Left lung (tissue), 14 donors: ENCODE measurements at regions of chr12 and their contacts with region 1.

Region 1: GRCh38 chr12:97308576-97309198 is 153.9 kb upstream of the RMST start:
- DNase-seq: peak in 2 of 4 donors; percentile 16 to 47
- ATAC-seq: peak; percentile 76
- H3K4me3 ChIP-seq: no peak overlapping the region
- H3K27ac ChIP-seq: no peak overlapping the region
- H3K4me1 ChIP-seq: peaks cover 0 to 4% of the 10 kb centered on the region in 2 donors
- H3K27me3 ChIP-seq: no peaks in the 10 kb centered on the region
- CTCF ChIP-seq: peak; percentile 59 to 79

Region 2: GRCh38 chr12:96578526-96579125 is 730.1 kb before region 1 on chr12:
- intact Hi-C with region 1: loop called in 1 of 2 experiments (anchors 10 kb)
- DNase-seq: peak in 2 of 4 donors; percentile 46 to 67
- ATAC-seq: peak; percentile 85
- H3K4me3 ChIP-seq: no peak overlapping the region
- H3K27ac ChIP-seq: no peak overlapping the region
- H3K4me1 ChIP-seq: no peaks in the 10 kb centered on the region
- H3K27me3 ChIP-seq: no peaks in the 10 kb centered on the region
- CTCF ChIP-seq: peak; percentile 38 to 53

Region 3: DNA sequence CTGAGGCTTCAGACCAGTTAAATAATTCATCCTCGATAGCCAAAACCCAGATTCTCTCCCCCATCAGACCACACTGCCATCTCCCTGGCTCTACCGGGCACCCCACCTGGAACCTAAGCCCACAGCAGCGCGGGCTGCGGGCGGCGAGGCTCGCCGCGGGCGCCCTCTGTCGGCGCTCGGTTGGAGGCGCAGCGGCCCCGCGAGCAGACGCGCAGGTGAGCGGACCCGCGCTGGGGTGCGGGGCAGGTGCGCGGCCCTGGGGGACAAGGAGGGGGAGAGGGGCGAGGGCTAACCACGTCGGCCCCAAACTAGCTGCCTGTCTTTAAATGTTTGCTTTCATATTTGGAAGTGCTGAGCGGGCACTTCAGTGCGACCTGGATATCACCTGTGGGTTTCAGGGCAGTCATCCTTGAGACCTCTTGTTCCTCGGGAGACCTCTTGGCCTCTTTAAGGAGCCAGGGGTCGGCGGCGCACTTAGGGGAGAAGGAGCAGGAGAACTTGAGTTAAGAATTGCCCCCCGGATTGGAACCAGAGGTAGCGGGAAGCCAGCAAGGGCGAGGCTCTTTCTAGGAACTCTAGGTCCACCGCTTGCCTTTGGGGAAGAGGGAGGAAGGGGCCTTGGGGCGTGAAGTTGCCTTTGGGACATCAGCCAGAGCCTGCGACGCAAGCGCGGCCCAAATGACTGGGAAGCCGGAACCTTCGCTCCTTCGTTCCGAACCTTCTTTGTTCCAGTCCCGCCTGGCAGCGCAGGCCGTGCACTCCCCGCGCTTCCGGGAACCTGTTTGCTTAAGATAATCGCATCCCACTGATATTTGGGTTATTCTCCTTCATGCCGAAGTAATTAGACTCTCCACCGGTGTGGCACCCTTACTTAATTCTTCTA is 323.0 kb before region 1 on chr12:
- intact Hi-C with region 1: loop called in 1 of 2 experiments (anchors 10 kb)
- DNase-seq: peak in 2 of 4 donors; percentile 42 to 83
- ATAC-seq: peak; percentile 95
- H3K4me3 ChIP-seq: peak overlapping the region; percentile 15 to 32
- H3K27ac ChIP-seq: no peak overlapping the region
- H3K4me1 ChIP-seq: peaks cover 0 to 9% of the 10 kb centered on the region in 2 donors
- H3K27me3 ChIP-seq: peaks cover 14 to 35% of the 10 kb centered on the region in 2 donors
- CTCF ChIP-seq: peak; percentile 78 to 95